ENCODE measurements at regions of chr17 and their contacts with region 1.

Region 1: GRCh38 chr17:3738562-3739295 is 15.0 kb downstream of the HASPIN start:
- DNase-seq: no peak
- H3K4me3 ChIP-seq: no peak overlapping the region
- H3K27ac ChIP-seq: no peak overlapping the region
- H3K4me1 ChIP-seq: no peaks in the 10 kb centered on the region
- H3K27me3 ChIP-seq: peaks cover 0 to 5% of the 10 kb centered on the region in 2 experiments
- CTCF ChIP-seq: no peak
- POLR2A ChIP-seq: no peak

Region 2: DNA sequence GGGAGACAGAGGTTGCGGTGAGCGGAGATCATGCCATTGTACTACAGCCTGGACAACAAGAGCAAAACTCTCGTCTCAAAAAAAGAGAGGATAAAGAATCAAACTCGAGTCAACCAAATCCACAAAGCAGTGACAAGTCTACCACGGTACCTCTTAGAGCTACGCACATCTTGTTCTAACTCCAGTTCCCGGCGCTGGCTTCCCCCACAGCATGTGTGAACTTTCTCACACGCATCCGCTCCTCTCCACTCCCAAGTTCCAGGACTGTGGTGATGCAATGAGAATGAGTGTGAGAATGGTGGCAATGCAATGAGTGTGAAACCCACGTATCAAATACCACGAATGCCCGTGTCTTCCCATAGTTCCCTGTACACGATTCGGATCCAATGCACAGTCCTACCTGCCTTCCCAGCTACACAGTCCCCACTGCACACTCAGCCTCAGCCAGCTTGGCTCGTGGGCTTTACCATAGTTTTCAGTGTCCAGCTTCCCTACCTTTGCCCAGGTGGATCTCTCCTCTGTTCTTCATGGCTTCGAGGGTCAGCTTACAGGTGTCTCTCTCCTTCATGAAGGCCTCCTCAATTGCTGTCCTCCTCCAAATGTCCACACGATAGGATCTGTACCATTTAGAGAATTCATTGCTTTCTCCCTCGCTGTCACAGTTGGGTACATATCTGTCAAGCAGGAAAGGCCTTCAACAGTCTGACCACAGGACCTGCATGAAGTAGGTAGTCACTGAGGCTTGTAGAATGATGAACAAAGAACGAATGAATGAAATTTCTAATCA is 33.6 kb before region 1 on chr17:
- CTCF ChIA-PET with region 1: interaction called, 5 read pairs
- POLR2A ChIA-PET with region 1: no interaction called
- dilution Hi-C with region 1: no loop called
- intact Hi-C with region 1: loop called (anchors 1 kb)
- DNase-seq: no peak
- H3K4me3 ChIP-seq: no peak overlapping the region
- H3K27ac ChIP-seq: no peak overlapping the region
- H3K4me1 ChIP-seq: no peaks in the 10 kb centered on the region
- H3K27me3 ChIP-seq: no peaks in the 10 kb centered on the region
- CTCF ChIP-seq: no peak
- POLR2A ChIP-seq: no peak

Region 3: DNA sequence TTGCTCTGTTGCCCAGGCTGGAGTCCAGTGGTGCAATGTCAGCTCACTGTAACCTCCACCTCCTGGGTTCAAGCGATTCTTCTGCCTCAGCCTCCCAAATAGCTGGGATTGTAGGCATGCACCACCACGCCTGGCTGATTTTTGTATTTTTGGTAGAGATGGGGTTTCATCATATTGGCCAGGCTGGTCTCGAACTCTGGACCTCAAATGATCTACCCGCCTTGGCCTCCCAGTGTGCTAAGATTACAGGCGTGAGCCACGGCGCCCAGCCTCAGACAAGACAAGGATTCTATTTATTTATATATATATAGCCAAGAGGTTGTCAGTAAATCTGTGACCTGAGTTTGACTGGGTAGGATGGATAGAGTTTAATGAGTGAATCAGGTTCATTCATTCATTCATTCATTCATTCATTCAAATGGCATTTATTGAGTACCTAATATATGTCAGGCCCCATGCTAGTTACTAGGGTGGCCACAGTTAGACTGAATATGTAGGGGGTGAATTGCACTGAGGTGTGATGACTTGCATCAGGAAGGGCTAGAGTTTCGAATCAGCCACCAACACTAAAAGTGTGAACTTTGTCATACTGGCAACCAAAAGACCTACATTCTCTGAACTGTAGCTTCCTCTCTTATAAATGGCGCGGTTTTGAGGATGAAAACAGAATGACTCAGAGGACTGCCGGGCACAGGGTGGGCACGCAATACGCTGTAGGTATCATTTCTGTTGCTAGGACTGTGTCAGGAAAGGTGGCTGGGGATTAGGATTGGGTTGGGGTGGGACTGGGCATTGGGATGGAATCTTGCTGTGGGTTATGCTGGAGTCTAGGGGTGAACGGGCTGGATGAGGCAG is 24.4 kb after region 1 on chr17:
- CTCF ChIA-PET with region 1: interaction called, 22 read pairs
- POLR2A ChIA-PET with region 1: no interaction called
- dilution Hi-C with region 1: no loop called
- intact Hi-C with region 1: no loop called
- DNase-seq: no peak
- H3K4me3 ChIP-seq: no peak overlapping the region
- H3K27ac ChIP-seq: no peak overlapping the region
- H3K4me1 ChIP-seq: peaks cover 2% of the 10 kb centered on the region
- H3K27me3 ChIP-seq: no peaks in the 10 kb centered on the region
- CTCF ChIP-seq: no peak
- POLR2A ChIP-seq: no peak

Region 4: DNA sequence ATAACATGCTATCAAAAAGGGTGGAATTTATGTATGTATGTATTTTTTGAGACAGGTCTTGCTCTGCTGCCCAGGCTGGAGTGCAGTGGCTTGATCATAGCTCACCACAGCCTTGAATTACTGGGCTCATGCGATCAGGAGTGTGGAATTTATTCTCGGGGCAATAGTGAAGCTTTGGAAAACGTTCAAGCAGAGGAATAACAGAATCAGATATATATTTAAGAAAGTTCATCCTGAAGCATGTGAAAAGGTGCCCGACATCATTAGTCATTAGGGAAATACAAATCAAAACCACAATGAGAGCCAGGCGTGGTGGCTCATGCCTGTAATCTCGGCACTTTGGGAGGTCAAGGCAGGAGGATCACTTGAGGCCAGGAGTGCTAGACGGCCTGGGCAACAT is 70.0 kb after region 1 on chr17:
- CTCF ChIA-PET with region 1: interaction called, 21 read pairs
- POLR2A ChIA-PET with region 1: no interaction called
- dilution Hi-C with region 1: no loop called
- intact Hi-C with region 1: no loop called
- DNase-seq: no peak
- H3K4me3 ChIP-seq: no peak overlapping the region
- H3K27ac ChIP-seq: no peak overlapping the region
- H3K4me1 ChIP-seq: no peaks in the 10 kb centered on the region
- H3K27me3 ChIP-seq: no peaks in the 10 kb centered on the region
- CTCF ChIP-seq: no peak
- POLR2A ChIP-seq: no peak

Region 5: DNA sequence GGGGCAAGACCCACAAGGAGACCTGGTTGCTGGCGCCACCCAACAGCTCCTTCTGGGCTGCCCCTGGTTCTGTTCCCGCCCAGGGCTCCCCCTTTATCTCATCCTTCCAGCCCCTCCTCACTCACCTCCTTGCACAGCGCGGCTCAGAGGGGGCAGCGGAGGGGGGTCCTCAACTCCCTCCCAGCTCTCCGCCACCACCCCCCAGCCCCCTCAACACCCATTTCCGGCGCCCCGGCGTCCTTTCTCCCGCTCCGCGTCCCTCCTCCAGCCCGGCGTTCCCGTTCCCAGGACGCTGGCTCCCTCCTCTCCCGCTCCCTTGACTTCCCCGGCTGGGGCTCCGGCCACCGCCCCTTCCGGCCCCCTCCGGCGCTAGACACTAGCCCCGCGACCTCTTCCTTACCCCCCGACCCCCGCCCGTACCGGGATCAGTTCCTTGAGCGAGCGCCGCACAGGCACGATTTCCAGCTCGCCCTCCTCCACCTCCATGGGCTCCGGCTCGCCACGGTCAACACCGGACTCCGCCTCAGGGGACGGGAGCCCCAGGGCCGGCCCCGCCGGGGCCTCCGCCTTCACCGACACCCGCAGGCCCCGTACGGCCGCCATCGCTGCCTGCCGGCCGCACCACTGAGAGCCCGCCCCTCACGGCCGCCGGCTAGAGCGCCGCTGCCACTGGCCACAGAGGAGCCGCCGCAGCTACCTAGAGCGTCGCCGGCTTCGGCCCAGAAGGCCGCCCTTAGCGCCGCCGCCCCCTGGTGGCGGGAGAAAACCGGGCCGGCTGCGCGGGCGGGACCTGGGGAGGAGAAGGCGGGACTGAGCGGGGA is 107.1 kb after region 1 on chr17 and contains the start of gene NCBP3:
- CTCF ChIA-PET with region 1: interaction called, 63 read pairs
- POLR2A ChIA-PET with region 1: interaction called, 3 read pairs
- dilution Hi-C with region 1: no loop called
- intact Hi-C with region 1: loop called (anchors 5 kb)
- DNase-seq: peak; percentile 93
- H3K4me3 ChIP-seq: peak within 1 kb of the TSS; percentile 75 to 97 (median 79)
- H3K27ac ChIP-seq: peak within 1 kb of the TSS; percentile 67
- H3K4me1 ChIP-seq: peaks cover 9% of the 10 kb centered on the region
- H3K27me3 ChIP-seq: no peaks in the 10 kb centered on the region
- CTCF ChIP-seq: peak; percentile 97
- POLR2A ChIP-seq: peak; percentile 87
- total RNA-seq, gene NCBP3: 51.1 and 52.2 TPM in 2 replicates

Measured in endothelial cell of umbilical vein (primary cell).